Mammary epithelial cell (primary cell): ENCODE measurements at regions of chr18 and their contacts with region 1.

Region 1: GRCh38 chr18:27378431-27379095 is 193.5 kb upstream of the CHST9 start:
- DNase-seq: peak; percentile 98
- H3K4me3 ChIP-seq: no peak overlapping the region
- H3K27ac ChIP-seq: peak overlapping the region; percentile 91
- H3K4me1 ChIP-seq: peaks cover 19% of the 10 kb centered on the region
- H3K27me3 ChIP-seq: no peaks in the 10 kb centered on the region
- CTCF ChIP-seq: no peak

Region 2: GRCh38 chr18:27349284-27349882 is 29.2 kb before region 1 on chr18:
- CTCF ChIA-PET with region 1: no interaction called
- dilution Hi-C with region 1: loop called (anchors 5 kb)
- in situ Hi-C with region 1: no loop called
- intact Hi-C with region 1: no loop called
- DNase-seq: no peak
- H3K4me3 ChIP-seq: no peak overlapping the region
- H3K27ac ChIP-seq: no peak overlapping the region
- H3K4me1 ChIP-seq: no peaks in the 10 kb centered on the region
- H3K27me3 ChIP-seq: no peaks in the 10 kb centered on the region
- CTCF ChIP-seq: no peak

Region 3: GRCh38 chr18:27447451-27447881 is 68.9 kb after region 1 on chr18:
- CTCF ChIA-PET with region 1: no interaction called
- dilution Hi-C with region 1: no loop called
- in situ Hi-C with region 1: no loop called
- intact Hi-C with region 1: no loop called
- DNase-seq: no peak
- H3K4me3 ChIP-seq: no peak overlapping the region
- H3K27ac ChIP-seq: no peak overlapping the region
- H3K4me1 ChIP-seq: no peaks in the 10 kb centered on the region
- H3K27me3 ChIP-seq: peaks cover 1% of the 10 kb centered on the region
- CTCF ChIP-seq: no peak

Region 4: GRCh38 chr18:28984731-28985130 is 1606.2 kb after region 1 on chr18:
- CTCF ChIA-PET with region 1: no interaction called
- dilution Hi-C with region 1: no loop called
- in situ Hi-C with region 1: no loop called
- intact Hi-C with region 1: no loop called
- DNase-seq: no peak
- H3K4me3 ChIP-seq: no peak overlapping the region
- H3K27ac ChIP-seq: no peak overlapping the region
- H3K4me1 ChIP-seq: no peaks in the 10 kb centered on the region
- H3K27me3 ChIP-seq: no peaks in the 10 kb centered on the region
- CTCF ChIP-seq: no peak